Activated CD8-positive, alpha-beta memory T cell treated with anti-CD3 and anti-CD28 coated beads, Interleukin-2, amount 10 ng/mL, durations not matched to agents 7 days and 5 days (primary cell): ENCODE measurements at regions of chr15 and their contacts with region 1.

Region 1: GRCh38 chr15:43510200-43511011 is 7.0 kb upstream of the MAP1A start:
- DNase-seq: peak; percentile 99
- ATAC-seq: peak; percentile 94
- H3K4me3 Mint-ChIP-seq: peak overlapping the region; percentile 94
- H3K27ac Mint-ChIP-seq: peak overlapping the region; percentile 93
- H3K4me1 Mint-ChIP-seq: peaks cover 49% of the 10 kb centered on the region
- H3K27me3 Mint-ChIP-seq: no peaks in the 10 kb centered on the region

Region 2: GRCh38 chr15:43423793-43424192 is 86.6 kb before region 1 on chr15:
- CTCF ChIA-PET with region 1: no interaction called
- DNase-seq: no peak
- ATAC-seq: no peak
- H3K4me3 Mint-ChIP-seq: no peak overlapping the region
- H3K27ac Mint-ChIP-seq: no peak overlapping the region
- H3K4me1 Mint-ChIP-seq: peaks cover 4% of the 10 kb centered on the region
- H3K27me3 Mint-ChIP-seq: no peaks in the 10 kb centered on the region

Region 3: DNA sequence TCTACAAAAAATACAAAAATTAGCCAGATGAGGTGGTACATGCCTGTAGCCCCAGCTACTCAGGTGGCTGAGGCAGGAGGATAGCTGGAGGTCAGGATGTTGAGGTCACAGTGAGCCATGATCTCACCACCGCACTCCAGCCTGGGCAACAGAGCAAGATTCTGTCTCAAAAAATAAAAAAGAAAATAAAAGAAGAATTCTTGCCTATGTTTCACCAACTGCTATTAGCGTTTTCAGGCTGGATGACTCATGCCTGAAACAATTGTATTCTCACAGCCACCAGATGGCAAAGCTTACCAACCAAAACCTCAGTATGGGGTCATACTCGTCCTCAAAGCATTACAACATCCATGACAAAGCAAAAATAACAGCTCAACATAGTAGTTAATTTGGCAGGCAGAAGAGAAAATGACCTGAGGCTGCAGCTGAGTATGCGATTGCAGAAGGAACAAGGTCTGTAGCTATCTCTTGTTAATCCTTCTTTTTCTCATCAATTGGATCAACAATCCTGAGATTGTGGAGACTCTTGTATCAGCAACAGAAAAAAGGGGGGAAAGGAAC is 69.6 kb before region 1 on chr15:
- CTCF ChIA-PET with region 1: interaction called, 66 read pairs
- DNase-seq: peak; percentile 76
- ATAC-seq: peak; percentile 96
- H3K4me3 Mint-ChIP-seq: peak overlapping the region; percentile 6
- H3K27ac Mint-ChIP-seq: peak overlapping the region; percentile 93
- H3K4me1 Mint-ChIP-seq: peaks cover 15% of the 10 kb centered on the region
- H3K27me3 Mint-ChIP-seq: no peaks in the 10 kb centered on the region

Region 4: GRCh38 chr15:43492673-43493601 is 17.5 kb before region 1 on chr15 and contains the start of gene TP53BP1:
- CTCF ChIA-PET with region 1: interaction called, 32 read pairs
- DNase-seq: peak; percentile 98
- ATAC-seq: peak; percentile 99
- H3K4me3 Mint-ChIP-seq: peak within 1 kb of the TSS; percentile 85
- H3K27ac Mint-ChIP-seq: peak within 1 kb of the TSS; percentile 96
- H3K4me1 Mint-ChIP-seq: peaks cover 31% of the 10 kb centered on the region
- H3K27me3 Mint-ChIP-seq: no peaks in the 10 kb centered on the region
- total RNA-seq, gene TP53BP1: 23.3 to 25.8 TPM

Region 5: DNA sequence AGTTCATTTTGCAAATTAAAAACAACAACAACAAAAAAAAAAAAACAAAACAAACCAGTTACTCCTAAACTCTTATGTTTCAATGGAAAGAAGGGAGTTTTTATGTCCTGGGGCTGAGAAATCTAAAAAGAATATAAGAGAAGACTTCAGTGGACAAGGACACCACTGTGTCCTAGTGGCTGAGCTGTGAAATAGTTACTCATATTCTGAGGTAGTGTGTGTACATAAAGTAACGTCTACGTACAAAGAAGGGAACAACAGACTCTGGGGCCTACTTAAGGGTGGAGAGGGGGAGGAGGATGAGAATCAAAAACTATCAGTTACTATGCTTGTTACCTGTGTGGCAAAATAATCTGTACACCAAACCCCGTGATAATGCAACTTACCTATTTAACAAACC is 11.4 kb before region 1 on chr15:
- CTCF ChIA-PET with region 1: interaction called, 32 read pairs
- DNase-seq: no peak
- ATAC-seq: no peak
- H3K4me3 Mint-ChIP-seq: no peak overlapping the region
- H3K27ac Mint-ChIP-seq: no peak overlapping the region
- H3K4me1 Mint-ChIP-seq: peaks cover under 1% of the 10 kb centered on the region
- H3K27me3 Mint-ChIP-seq: no peaks in the 10 kb centered on the region

Region 6: GRCh38 chr15:43524254-43524845 is 13.9 kb after region 1 on chr15:
- CTCF ChIA-PET with region 1: interaction called, 18 read pairs
- DNase-seq: no peak
- ATAC-seq: no peak
- H3K4me3 Mint-ChIP-seq: no peak overlapping the region
- H3K27ac Mint-ChIP-seq: no peak overlapping the region
- H3K4me1 Mint-ChIP-seq: peaks cover 16% of the 10 kb centered on the region
- H3K27me3 Mint-ChIP-seq: no peaks in the 10 kb centered on the region